Posterior cingulate gyrus (tissue), 11 donors: ENCODE measurements at regions of chr7 and their contacts with region 1.

Region 1: GRCh38 chr7:101815835-101816493 is 1.5 kb upstream of the CUX1 start:
- DNase-seq: peak; percentile 42 to 93 (median 54)

Region 2: DNA sequence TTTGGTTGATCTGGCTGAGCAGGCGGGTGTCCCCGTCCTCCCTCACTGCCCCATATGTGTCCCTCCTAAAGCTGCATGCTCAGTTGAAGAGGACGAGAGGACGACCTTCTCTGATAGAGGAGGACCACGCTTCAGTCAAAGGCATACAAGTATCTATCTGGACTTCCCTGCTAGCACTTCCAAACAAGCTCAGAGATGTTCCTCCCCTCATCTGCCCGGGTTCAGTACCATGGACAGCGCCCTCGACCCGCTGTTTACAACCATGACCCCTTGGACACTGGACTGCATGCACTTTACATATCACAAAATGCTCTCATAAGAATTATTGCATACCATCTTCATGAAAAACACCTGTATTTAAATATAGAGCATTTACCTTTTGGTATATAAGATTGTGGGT is 757.6 kb before region 1 on chr7:
- intact Hi-C with region 1: no loop called
- DNase-seq: peak in 9 of 10 donors; percentile 11 to 90 (median 56)

Region 3: GRCh38 chr7:102236592-102237287 is 420.8 kb after region 1 on chr7:
- intact Hi-C with region 1: loop called (anchors 2 kb)
- DNase-seq: peak; percentile 37 to 95 (median 68)